Body of pancreas (tissue), 4 donors: ENCODE measurements at regions of chr1 and their contacts with region 1.

Region 1: DNA sequence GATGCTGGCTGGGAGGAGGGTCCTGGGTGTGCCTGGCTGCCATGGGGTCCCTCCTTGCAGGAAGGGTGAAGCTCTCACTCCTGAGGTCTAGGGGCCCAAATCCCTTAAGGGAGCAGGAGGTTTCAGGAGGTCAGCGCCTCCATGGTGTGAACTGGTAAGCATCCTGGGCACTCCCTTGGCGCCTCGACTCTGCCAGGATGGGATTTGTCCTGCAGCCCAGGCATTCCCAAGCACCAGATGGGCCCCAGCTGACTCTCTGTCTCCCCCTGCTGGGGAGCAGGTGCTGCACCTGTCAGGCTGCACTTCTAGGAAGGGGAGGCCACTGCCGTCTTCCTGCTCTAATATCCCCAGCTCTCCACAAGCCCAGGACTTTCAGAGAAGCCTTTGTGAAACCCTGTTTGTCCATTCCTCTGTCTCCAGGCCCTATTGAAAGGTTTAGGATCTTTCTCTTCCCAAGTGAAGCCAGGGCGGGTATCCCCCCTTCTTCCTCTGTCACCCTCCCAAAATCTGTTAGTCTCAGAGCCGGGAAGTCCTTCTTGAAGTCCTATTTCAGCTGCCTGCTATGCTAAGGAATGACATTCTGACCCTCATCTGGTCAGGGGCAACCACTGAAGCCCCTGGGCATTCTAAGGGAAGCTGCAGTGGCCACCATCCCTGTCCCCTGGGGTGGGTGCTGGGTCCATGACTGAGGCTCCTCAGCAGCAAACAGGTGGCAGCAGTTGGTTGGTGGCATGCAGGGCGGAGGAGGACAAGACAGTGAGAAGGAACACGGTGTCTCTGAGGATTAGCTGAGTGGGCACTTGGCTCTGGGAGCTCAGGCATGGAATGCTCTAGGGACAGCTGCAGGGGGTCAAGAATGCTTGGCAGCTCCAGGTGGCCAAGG is 3.3 kb downstream of the MYBPH start:
- DNase-seq: peak; percentile 74 to 79 (median 78)
- ATAC-seq: peak; percentile 74
- H3K4me3 ChIP-seq: no peak overlapping the region
- H3K27ac ChIP-seq: peak overlapping the region in 1 of 4 donors; percentile 2
- H3K4me1 ChIP-seq: peaks cover 20% of the 10 kb centered on the region
- H3K27me3 ChIP-seq: no peaks in the 10 kb centered on the region
- CTCF ChIP-seq: peak; percentile 84 to 94 (median 90)
- POLR2A ChIP-seq: no peak

Region 2: GRCh38 chr1:203039609-203040512 is 132.5 kb before region 1 on chr1:
- intact Hi-C with region 1: loop called (anchors 5 kb)
- DNase-seq: no peak
- ATAC-seq: no peak
- H3K4me3 ChIP-seq: no peak overlapping the region
- H3K27ac ChIP-seq: no peak overlapping the region
- H3K4me1 ChIP-seq: no peaks in the 10 kb centered on the region
- H3K27me3 ChIP-seq: no peaks in the 10 kb centered on the region
- CTCF ChIP-seq: no peak
- POLR2A ChIP-seq: no peak

Region 3: DNA sequence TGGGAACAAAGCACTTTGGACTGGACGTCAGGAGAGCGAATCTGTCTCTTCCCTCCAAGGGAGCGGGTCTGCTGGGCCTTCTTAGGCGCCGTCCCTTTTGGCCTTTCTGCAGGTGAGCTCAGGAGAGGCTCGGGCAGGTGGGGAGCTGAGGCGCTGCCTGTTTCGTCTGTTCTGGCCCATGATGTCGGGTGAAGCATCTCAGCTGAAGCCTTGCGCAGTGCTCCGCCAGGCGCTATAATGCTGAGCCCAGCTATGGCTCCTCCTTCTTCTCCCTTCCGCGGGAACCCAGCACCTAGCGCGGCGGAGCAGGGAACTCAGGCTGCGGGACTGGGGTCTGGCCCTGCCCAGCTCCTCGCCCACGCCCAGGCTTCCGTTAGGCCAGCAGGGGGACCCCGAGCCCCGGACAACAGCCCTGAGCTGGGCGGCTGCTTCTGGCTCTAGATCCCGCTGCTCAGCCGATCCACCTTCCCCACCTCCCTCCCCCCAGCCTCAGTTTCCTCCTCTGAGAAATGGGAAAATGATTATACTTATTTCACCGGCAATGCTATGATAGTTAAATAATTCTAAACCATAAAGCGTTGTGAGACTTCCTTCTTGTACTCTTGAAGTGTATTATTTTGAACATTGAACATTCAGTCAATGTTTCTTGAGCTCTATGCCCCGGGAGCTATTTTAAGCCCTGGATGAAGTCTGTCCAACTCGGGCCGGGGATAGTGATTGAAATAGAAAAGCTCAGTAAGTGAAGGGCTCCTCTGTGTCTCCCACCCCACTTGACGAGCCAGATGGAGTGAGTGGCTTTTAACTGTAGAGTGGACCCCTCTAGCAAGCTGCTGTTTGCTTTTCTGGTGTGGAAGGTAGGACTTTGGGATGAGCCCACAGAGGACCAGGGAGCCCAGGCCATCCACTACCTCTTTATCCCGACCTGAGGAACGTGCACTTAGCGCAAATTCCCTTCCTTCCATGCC is 54.5 kb before region 1 on chr1:
- intact Hi-C with region 1: loop called (anchors 5 kb)
- DNase-seq: peak; percentile 75 to 82 (median 78)
- ATAC-seq: peak; percentile 92
- H3K4me3 ChIP-seq: no peak overlapping the region
- H3K27ac ChIP-seq: no peak overlapping the region
- H3K4me1 ChIP-seq: peaks cover 7% of the 10 kb centered on the region
- H3K27me3 ChIP-seq: no peaks in the 10 kb centered on the region
- CTCF ChIP-seq: peak; percentile 77 to 92 (median 86)
- POLR2A ChIP-seq: no peak

Region 4: GRCh38 chr1:203361945-203362719 is 189.8 kb after region 1 on chr1:
- intact Hi-C with region 1: no loop called
- DNase-seq: no peak
- ATAC-seq: no peak
- H3K4me3 ChIP-seq: no peak overlapping the region
- H3K27ac ChIP-seq: no peak overlapping the region
- H3K4me1 ChIP-seq: peaks cover 14% of the 10 kb centered on the region
- H3K27me3 ChIP-seq: no peaks in the 10 kb centered on the region
- CTCF ChIP-seq: no peak
- POLR2A ChIP-seq: no peak